ENCODE measurements at regions of chr22 and their contacts with region 1.

Region 1: DNA sequence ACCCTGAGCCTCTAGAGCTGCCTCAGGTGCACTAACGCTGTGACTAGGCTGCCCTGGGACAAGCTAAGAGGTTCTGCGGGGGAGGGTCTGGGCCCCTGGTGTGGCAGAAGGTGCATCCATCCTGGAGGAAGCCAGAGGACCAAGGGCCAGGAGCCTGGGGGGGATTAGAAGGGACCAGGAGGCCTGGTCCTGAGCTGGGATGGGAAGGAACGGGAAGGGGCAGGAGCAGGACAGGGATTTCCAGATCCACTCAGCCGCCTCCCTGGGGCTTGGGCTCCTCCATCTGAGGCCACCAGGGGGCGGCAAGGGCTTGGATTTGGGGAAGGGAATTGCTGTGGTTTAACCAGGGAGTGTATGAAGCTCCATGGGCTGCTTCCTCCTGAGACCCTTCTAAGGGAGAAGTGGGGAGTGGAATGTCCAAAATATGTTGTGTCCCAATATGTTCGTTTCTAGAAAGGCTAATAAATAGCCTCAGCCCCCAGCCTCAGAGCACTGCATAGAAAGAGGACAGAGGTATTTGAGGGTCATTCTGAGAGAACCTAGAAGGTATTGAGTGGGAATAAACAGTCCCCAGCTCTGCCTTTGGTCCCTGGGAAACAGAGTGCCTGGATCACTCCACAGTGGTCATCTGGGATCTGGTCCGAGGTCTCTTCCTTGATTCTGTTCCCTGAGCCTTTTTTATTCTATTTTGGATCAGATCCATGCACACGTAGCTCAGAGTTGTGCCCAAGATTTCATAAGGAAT is 17.4 kb upstream of the PRAME start:
- DNase-seq: peak; percentile 29
- ATAC-seq: peak; percentile 99
- H3K4me3 ChIP-seq: no peak overlapping the region
- H3K27ac ChIP-seq: no peak overlapping the region
- H3K4me1 ChIP-seq: peaks cover 5 to 9% of the 10 kb centered on the region in 2 experiments; a peak in 3 of 4 replicates
- H3K27me3 ChIP-seq: no peaks in the 10 kb centered on the region
- CTCF ChIP-seq: peak; percentile 56 to 95 (median 90); a peak in 5 of 6 replicates
- POLR2A ChIP-seq: no peak
- RAD21 ChIP-seq: peak; percentile 62

Region 2: DNA sequence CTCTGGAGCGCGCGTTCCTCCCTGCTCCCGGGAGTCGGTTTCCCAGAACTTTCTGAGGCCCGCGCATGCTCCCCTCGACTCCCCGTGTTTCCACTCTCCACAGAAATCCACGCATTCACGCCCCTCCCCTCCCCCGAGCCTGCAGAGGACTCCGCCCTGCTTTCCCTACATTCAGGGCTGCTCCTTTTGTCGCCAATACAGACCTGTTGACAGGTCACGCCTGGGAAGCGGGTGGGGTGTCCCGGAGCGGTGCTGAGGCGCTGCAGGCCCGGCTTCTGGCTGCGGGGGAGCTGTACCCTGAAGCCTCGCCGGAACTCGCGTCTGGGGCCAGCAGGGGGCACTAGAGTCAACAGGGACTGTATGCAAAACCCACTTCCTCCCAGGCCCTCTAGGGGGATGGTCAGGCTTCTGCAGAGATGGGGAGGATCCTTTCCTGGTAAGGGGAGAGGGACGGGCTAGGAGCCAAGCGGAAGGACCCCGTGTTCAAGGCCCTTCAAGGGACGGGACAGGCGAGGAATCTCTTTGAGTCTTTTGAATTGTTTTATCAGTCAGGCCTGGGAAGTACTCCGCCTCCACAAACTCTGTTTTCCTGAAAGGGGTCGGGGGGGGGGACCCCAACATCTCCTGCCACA is 17.3 kb before region 1 on chr22 and contains the start of gene PRAME:
- CTCF ChIA-PET with region 1: interaction called, 11 read pairs
- POLR2A ChIA-PET with region 1: no interaction called
- RAD21 ChIA-PET with region 1: no interaction called
- intact Hi-C with region 1: no loop called
- DNase-seq: peak; percentile 80
- ATAC-seq: peak; percentile 98
- H3K4me3 ChIP-seq: peak within 1 kb of the TSS; percentile 60 to 61
- H3K27ac ChIP-seq: peak within 1 kb of the TSS; percentile 52; the same call in 1 of the 2 replicates
- H3K4me1 ChIP-seq: peaks cover 0 to 11% of the 10 kb centered on the region in 2 experiments; a peak in 2 of 4 replicates
- H3K27me3 ChIP-seq: no peaks in the 10 kb centered on the region
- CTCF ChIP-seq: peak; percentile 98 to 100 (median 99)
- POLR2A ChIP-seq: no peak
- RAD21 ChIP-seq: 0 out of 2 replicates have a peak, but pooled peaks have one; percentile 23
- total RNA-seq, gene PRAME: 28.4 TPM

Region 3: DNA sequence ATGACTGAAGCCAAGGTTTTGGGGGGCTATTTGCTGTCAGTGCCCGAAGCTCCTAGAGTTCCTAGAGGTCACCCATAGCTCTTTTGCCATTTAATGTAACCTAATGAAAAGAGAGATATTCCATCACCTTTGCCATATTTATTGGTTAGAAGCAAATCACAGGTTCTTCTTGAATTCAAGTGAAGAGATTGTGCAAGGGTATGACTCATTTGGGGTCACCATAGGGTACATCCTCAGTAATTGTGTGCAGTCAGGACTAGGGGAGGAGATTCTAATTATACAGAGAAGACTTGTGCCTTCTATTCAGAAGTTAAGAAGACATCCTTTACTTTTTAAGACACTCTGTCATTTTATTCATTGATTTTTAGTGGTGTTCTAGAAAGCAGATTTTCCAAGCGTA is 10.4 kb before region 1 on chr22:
- CTCF ChIA-PET with region 1: interaction called, 17 read pairs
- POLR2A ChIA-PET with region 1: no interaction called
- RAD21 ChIA-PET with region 1: no interaction called
- intact Hi-C with region 1: no loop called
- DNase-seq: no peak
- ATAC-seq: no peak
- H3K4me3 ChIP-seq: no peak overlapping the region
- H3K27ac ChIP-seq: no peak overlapping the region
- H3K4me1 ChIP-seq: no peaks in the 10 kb centered on the region
- H3K27me3 ChIP-seq: peaks cover 10% of the 10 kb centered on the region; the same call in 1 of the 2 replicates
- CTCF ChIP-seq: no peak
- POLR2A ChIP-seq: no peak
- RAD21 ChIP-seq: no peak

Region 4: DNA sequence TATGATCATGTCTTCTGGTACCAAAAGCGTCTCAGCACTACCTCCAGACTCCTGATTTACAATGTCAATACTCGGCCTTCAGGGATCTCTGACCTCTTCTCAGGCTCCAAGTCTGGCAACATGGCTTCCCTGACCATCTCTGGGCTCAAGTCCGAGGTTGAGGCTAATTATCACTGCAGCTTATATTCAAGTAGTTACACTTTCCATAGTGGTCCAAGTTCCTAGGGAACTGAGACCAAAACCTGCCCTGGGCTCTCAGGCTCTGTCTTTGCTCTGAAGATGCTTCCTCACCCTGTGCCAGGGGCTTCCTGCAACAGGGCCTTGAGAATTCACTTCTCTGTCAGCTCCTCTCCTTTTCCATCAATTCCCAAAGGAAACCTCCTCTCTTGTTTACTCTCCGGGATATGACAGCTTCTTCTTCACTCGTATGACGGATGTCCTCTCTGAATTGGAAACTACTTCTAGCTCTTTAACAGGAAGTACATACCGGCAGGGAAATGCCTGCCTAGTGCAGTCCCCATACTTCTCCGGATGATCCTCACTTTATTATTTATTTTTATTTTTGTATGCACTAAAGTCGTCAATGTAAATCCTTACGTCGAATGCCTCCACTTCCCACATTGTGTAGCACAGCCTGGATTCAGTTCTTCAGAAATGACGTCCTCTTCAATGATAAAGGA is 12.2 kb after region 1 on chr22:
- CTCF ChIA-PET with region 1: interaction called, 64 read pairs
- POLR2A ChIA-PET with region 1: interaction called, 12 read pairs
- RAD21 ChIA-PET with region 1: interaction called in 1 of 2 experiments, 4 read pairs
- intact Hi-C with region 1: no loop called
- DNase-seq: no peak
- ATAC-seq: no peak
- H3K4me3 ChIP-seq: no peak overlapping the region
- H3K27ac ChIP-seq: no peak overlapping the region
- H3K4me1 ChIP-seq: peaks cover 0 to 3% of the 10 kb centered on the region in 2 experiments; a peak in 1 of 4 replicates
- H3K27me3 ChIP-seq: no peaks in the 10 kb centered on the region
- CTCF ChIP-seq: no peak
- POLR2A ChIP-seq: no peak
- RAD21 ChIP-seq: no peak

Region 5: GRCh38 chr22:22593964-22594656 is 17.7 kb after region 1 on chr22:
- CTCF ChIA-PET with region 1: interaction called, 64 read pairs
- POLR2A ChIA-PET with region 1: no interaction called
- RAD21 ChIA-PET with region 1: no interaction called
- intact Hi-C with region 1: no loop called
- DNase-seq: peak; percentile 48
- ATAC-seq: peak; percentile 91
- H3K4me3 ChIP-seq: no peak overlapping the region
- H3K27ac ChIP-seq: no peak overlapping the region
- H3K4me1 ChIP-seq: peaks cover 0 to 3% of the 10 kb centered on the region in 2 experiments; a peak in 1 of 4 replicates
- H3K27me3 ChIP-seq: no peaks in the 10 kb centered on the region
- CTCF ChIP-seq: peak; percentile 48 to 85 (median 83); a peak in 5 of 6 replicates
- POLR2A ChIP-seq: no peak
- RAD21 ChIP-seq: peak; percentile 55

Measured in HCT116 (cell line).